GM12878 (cell line): ENCODE measurements at regions of chr4 and their contacts with region 1.

Region 1: DNA sequence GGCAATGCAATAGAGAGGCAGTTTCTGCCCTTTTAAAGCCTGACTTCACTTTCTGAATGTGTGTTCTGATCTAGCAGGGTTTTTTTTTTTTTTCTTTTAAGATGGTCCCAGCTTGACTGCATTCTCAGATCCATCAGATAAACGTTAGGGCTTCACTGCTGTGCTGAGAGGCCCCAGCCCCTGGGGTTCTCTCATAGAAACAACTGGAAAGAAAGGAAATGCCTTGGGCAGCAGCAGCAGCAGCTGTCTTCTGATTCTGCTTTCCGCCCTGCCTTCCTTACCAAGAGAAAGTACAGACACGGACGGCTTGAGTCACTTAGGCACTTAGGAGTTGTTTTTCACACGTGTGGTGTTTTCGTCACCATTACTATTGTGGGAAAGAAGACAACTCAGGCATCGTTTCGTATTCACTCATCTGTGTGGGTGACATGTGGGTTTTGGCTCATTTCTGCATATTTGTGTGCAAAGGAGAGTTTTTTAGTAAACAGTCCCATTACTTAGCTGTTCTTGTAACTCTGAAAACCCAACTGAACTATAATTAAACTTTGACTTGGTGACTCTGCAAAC is 172.0 kb downstream of the PTTG2 start:
- DNase-seq: peak; percentile 100
- ATAC-seq: peak; percentile 63
- H3K4me3 ChIP-seq: 0 out of 2 replicates have a peak overlapping the region, but pooled peaks have one; percentile 10
- H3K27ac ChIP-seq: peak overlapping the region; percentile 96
- H3K4me1 ChIP-seq: peaks cover 68% of the 10 kb centered on the region
- H3K27me3 ChIP-seq: no peaks in the 10 kb centered on the region
- CTCF ChIP-seq: no peak
- EP300 ChIP-seq: peak; percentile 100
- POLR2A ChIP-seq: peak; percentile 74
- RAD21 ChIP-seq: peak; percentile 14; the same call in 1 of the 2 replicates

Region 2: GRCh38 chr4:38069271-38069760 is 62.9 kb before region 1 on chr4:
- CTCF ChIA-PET with region 1: interaction called, 12 read pairs
- POLR2A ChIA-PET with region 1: interaction called, 11 read pairs
- RAD21 ChIA-PET with region 1: interaction called, 33 read pairs
- SMC1A ChIA-PET with region 1: interaction called, 54 read pairs
- in situ Hi-C with region 1: no loop called
- intact Hi-C with region 1: no loop called
- DNase-seq: no peak
- ATAC-seq: peak; percentile 63
- H3K4me3 ChIP-seq: no peak overlapping the region
- H3K27ac ChIP-seq: peak overlapping the region; percentile 22
- H3K4me1 ChIP-seq: peaks cover 19% of the 10 kb centered on the region
- H3K27me3 ChIP-seq: no peaks in the 10 kb centered on the region
- CTCF ChIP-seq: peak; percentile 48 to 79 (median 67); a peak in 5 of 6 replicates
- EP300 ChIP-seq: no peak
- POLR2A ChIP-seq: no peak
- RAD21 ChIP-seq: peak; percentile 92

Region 3: DNA sequence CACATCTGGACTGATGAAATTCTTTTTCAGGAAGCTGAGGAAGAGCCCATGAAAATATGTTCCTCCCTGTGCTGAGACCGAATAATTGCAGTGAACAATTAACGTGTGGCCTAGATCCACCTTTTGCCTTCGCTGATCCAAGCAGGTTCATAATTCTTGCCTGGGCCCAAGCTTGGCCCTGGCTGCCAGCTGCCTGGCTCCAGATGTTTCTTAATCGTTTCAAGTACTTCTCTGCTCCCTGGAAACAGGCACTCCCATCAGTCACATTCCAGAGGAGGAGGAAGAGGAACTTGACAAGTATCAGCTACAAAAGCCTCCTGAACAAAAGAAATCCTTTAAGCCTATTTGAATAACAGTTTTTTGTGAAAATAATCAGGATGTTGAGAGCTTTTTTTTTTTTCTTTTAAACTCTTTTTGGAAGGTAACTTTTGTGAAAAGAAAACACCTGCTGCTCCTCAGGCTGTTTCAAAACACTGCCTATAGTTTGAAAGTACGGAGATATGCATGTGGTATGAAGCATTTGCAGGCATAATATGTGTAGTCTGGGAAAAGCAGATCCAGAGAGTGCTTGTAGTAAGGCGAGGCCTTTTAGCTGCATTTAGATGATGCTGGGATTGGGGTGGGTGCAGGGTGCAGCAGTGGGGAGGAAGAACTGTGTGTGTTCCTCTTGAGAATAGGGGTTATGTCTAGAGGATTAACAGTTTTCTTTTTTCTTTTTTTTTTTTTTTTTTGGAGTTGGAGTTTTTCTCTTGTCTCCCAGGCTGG is 17.6 kb before region 1 on chr4:
- CTCF ChIA-PET with region 1: interaction called, 5 read pairs
- POLR2A ChIA-PET with region 1: interaction called, 9 read pairs
- RAD21 ChIA-PET with region 1: interaction called, 9 read pairs
- SMC1A ChIA-PET with region 1: interaction called, 38 read pairs
- in situ Hi-C with region 1: no loop called
- intact Hi-C with region 1: no loop called
- DNase-seq: no peak
- ATAC-seq: no peak
- H3K4me3 ChIP-seq: no peak overlapping the region
- H3K27ac ChIP-seq: no peak overlapping the region
- H3K4me1 ChIP-seq: peaks cover 16% of the 10 kb centered on the region
- H3K27me3 ChIP-seq: no peaks in the 10 kb centered on the region
- CTCF ChIP-seq: no peak
- EP300 ChIP-seq: no peak
- POLR2A ChIP-seq: no peak
- RAD21 ChIP-seq: no peak

Region 4: DNA sequence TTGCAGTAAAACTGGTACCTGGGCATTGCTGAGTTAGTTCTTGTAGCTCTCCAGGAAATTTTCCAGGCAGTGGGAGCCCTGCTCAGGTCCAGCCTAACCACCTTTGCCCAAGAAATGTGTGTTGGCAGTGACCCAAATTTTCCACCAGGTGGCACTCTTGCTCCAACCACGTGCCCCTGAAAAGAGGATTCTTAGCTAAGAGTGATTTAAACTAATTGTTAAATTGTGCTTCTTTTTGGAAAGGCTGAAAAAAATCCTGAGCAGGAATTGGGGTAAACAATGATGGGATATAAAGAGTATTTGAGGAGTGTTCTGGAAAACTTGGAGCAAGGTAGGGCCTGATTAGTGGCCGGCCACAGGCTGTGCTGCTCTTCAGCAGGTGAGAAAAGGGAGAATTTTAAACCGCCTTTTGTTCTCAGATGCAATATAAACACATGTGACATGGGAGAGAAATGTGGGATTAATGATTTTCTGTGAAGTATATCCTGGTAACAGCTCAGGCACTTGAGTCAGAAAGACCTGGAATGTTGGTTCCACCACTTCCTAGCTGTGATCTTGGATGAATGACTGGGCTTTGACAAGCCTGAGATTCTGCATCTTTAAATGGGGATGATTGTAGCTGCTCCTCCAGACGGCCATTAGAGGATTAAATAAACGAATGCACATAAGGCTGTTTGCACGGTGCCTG is 47.6 kb after region 1 on chr4:
- CTCF ChIA-PET with region 1: interaction called, 43 read pairs
- POLR2A ChIA-PET with region 1: interaction called, 4 read pairs
- RAD21 ChIA-PET with region 1: interaction called, 78 read pairs
- SMC1A ChIA-PET with region 1: interaction called, 67 read pairs
- in situ Hi-C with region 1: loop called (anchors 5 kb)
- intact Hi-C with region 1: loop called (anchors 1 kb)
- DNase-seq: peak; percentile 56
- ATAC-seq: peak; percentile 85
- H3K4me3 ChIP-seq: no peak overlapping the region
- H3K27ac ChIP-seq: no peak overlapping the region
- H3K4me1 ChIP-seq: peaks cover 39% of the 10 kb centered on the region
- H3K27me3 ChIP-seq: no peaks in the 10 kb centered on the region
- CTCF ChIP-seq: peak; percentile 76 to 94 (median 88)
- EP300 ChIP-seq: no peak
- POLR2A ChIP-seq: no peak
- RAD21 ChIP-seq: peak; percentile 98

Region 5: DNA sequence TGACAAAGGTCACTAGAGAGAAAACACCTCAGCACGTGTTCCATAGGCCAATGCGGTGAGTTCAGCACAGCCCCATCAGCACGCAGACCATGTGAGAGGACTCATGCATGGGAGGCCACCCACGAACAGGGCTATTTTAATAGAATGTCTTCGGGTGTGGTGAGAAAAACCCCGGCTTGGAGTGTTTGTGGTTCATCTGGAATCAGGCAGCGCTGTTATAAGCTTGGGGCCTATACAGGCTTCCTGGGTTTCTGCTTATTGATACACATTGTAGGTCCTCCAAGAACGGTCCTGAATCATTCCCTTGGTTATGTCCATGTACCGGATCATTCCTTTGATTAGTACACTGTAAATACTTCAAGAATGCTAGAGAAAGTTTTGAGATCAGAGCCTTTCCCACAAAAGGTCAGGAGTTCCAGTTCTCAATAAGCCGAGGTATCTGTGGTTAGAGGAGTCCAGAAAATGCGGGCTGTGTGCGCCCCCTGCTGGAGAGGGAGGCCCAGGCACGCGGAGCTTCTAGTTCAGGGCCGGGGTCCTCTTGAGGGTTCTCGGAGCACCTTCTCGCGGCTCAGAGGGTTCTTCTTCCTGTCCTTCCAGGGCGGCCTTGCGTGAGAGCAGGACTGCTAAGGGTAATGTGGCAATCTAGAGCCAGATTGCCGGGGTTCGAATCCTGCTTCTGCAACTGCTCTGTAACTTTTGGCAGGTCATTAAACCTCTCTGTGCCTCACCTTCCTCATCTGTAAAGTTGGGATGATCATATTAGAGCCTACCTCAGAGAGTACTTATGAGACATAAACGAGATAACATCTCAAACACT is 598.8 kb after region 1 on chr4:
- CTCF ChIA-PET with region 1: interaction called, 5 read pairs
- POLR2A ChIA-PET with region 1: interaction called, 3 read pairs
- RAD21 ChIA-PET with region 1: interaction called, 4 read pairs
- SMC1A ChIA-PET with region 1: interaction called, 4 read pairs
- in situ Hi-C with region 1: no loop called
- intact Hi-C with region 1: loop called (anchors 2 kb)
- DNase-seq: peak; percentile 87
- ATAC-seq: peak; percentile 97
- H3K4me3 ChIP-seq: no peak overlapping the region
- H3K27ac ChIP-seq: peak overlapping the region; percentile 57
- H3K4me1 ChIP-seq: peaks cover 16% of the 10 kb centered on the region
- H3K27me3 ChIP-seq: no peaks in the 10 kb centered on the region; a peak in 1 of 4 replicates
- CTCF ChIP-seq: peak; percentile 69 to 96 (median 89)
- EP300 ChIP-seq: peak; percentile 75 to 91; a peak in 3 of 4 replicates
- POLR2A ChIP-seq: no peak
- RAD21 ChIP-seq: peak; percentile 97

Region 6: GRCh38 chr4:39609454-39609931 is 1477.3 kb after region 1 on chr4:
- CTCF ChIA-PET with region 1: no interaction called
- POLR2A ChIA-PET with region 1: no interaction called
- RAD21 ChIA-PET with region 1: no interaction called
- SMC1A ChIA-PET with region 1: no interaction called
- in situ Hi-C with region 1: loop called (anchors 25 kb)
- intact Hi-C with region 1: no loop called
- DNase-seq: peak; percentile 96
- ATAC-seq: peak; percentile 91
- H3K4me3 ChIP-seq: 0 out of 2 replicates have a peak overlapping the region, but pooled peaks have one; percentile 39
- H3K27ac ChIP-seq: peak overlapping the region; percentile 80
- H3K4me1 ChIP-seq: peaks cover 49% of the 10 kb centered on the region
- H3K27me3 ChIP-seq: no peaks in the 10 kb centered on the region
- CTCF ChIP-seq: no peak
- EP300 ChIP-seq: peak; percentile 97 to 100
- POLR2A ChIP-seq: 0 out of 2 replicates have a peak, but pooled peaks have one; percentile 29
- RAD21 ChIP-seq: no peak; the same call in 1 of the 2 replicates